Left cardiac atrium (tissue), 4 donors: ENCODE measurements at regions of chr2 and their contacts with region 1.

Region 1: DNA sequence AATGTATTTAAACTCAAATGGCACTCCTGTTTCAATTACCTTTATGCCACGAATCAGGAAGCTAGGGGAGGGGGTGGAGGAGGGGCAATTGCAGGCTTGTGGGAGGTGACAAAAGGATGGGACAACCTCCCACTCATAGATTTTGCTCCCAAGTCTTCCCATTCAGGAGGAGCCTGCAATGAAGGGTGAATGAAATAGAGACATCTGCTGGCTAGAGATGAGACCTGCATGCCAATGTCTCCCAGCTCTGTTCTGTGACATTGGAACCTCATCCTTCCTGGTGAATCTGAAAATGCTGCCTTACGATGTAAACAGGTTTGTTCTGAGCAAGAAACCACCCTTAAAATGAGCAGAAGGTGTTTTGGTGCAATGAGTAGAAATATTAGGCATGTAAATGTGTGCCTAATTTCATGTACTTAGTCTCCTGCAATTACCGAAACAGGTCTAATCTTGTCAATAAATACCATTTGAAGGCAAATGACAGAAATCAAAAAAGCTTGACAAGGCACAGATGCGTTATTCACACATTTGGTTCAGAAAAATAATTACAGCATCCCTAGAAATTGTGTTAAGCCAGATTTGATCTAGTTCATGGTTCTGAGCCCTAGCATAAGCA is 2.7 kb upstream of the PID1 start:
- DNase-seq: no peak
- ATAC-seq: peak; percentile 71 to 86

Region 2: DNA sequence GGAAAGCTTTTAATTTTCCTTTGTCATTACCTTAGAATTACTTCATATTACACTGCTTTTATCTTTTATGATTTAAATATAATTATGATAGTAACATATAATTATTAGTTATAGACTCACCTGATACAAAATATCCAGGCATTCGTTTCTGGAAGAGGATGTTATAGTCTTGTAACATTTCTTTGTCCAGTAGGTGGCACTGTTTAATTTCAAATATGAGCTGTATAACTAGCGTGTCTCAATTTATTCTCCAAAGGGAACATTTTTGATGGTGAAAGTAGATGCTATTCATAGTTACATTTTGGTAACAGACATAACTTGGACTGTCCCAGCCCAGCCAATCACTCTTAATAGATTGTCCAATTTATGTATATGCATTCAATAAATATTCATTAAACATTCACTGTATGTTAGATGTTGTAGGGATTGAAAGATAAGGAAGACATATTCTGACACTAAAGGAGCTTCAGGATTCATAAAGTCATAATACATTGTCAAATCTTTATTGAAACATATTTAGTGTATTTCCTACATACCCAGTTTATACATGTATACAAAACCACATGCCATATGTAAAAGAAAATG is 1383.2 kb before region 1 on chr2:
- intact Hi-C with region 1: loop called in 1 of 2 experiments (anchors 10 kb)
- DNase-seq: no peak
- ATAC-seq: peak; percentile 50 to 67

Region 3: DNA sequence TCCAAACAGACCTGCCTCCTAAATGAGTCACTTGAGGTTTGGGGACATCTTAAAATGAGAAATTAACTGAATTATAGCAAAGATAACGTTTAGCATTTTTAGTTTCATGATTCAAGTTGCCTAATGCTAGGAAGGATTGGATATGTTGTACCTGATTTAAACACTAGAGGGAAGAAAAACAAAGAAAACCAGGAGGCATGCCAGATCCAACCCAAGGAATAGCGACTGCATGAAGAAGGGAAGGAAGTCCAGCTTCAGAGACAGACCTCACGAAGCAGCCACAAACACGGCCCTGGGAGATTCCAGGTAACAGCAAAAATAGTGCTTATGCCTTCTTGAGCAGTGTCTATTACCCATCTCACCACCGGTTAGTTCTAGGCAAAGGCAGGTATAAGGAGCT is 592.4 kb before region 1 on chr2:
- intact Hi-C with region 1: loop called in 1 of 2 experiments (anchors 5 kb)
- DNase-seq: no peak
- ATAC-seq: peak; percentile 38 to 50

Region 4: GRCh38 chr2:228699400-228699799 is 574.4 kb before region 1 on chr2:
- intact Hi-C with region 1: loop called (anchors 2 to 10 kb)
- DNase-seq: no peak
- ATAC-seq: peak; percentile 59 to 65

Region 5: DNA sequence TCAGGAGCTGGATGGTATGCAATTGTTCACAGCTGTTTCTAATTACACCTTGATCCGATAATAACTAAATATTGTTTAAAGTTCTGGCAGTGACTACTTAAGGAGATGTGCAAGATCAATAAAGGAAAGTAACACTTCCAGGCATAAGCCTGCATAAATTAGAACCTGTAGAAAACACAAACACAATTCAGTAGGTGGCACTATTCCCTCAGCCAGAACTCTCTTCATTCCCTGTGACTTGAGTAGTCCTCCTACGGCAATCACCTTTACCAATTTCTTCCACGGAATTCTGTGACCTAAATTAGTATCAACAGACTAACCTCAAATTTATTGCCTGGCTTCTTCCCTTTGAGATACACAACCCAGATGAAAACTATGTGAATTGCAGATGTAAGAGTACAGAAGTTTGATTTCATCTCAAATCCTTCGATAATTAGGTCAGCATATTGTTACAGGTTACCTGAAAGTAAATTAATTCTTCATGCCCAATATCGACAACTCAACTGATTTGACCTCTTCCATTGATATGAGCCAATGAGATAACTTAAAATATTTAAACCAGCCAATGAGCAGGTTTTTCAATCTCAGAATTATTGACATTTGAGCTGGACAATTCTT is 140.6 kb before region 1 on chr2:
- intact Hi-C with region 1: loop called (anchors 2 to 10 kb)
- DNase-seq: no peak
- ATAC-seq: peak; percentile 44 to 66